ENCODE measurements at regions of chr5 and their contacts with region 1.

Region 1: GRCh38 chr5:135191084-135191826 is 157.2 kb upstream of the PITX1 start:
- DNase-seq: peak; percentile 90
- H3K4me3 Mint-ChIP-seq: peak overlapping the region; percentile 76
- H3K27ac Mint-ChIP-seq: no peak overlapping the region
- H3K4me1 Mint-ChIP-seq: peaks cover 7% of the 10 kb centered on the region
- H3K27me3 Mint-ChIP-seq: no peaks in the 10 kb centered on the region
- CTCF ChIP-seq: peak; percentile 99

Region 2: DNA sequence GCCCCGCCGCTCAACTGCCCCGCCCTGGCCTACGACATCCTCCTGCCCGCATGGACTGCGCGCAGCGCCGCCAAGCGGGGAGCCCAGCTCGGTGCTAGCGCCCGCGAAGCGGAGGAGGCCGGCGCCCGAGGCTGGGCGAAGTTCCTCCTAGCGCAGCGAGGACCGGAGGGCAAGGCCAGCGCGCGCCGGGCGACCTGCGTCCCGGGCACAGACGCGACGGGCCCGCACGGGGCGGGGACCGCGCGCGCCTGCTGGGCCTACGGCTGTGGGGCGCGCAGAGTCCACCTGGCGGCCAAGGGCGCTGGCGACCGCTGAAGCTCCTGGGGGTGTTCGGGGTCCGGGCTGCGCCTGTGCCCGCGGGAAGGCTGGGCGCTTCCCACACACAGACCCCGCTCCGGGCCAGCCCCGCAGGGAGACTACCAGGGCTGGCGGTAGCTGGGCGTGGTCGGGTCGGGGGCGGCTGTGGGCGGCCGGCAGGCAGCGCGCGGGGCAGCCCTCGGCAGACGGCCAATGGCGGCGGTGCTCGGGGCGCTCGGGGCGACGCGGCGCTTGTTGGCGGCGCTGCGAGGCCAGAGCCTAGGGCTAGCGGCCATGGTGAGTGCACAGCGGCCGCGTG is 286.5 kb before region 1 on chr5 and contains the start of gene PCBD2:
- CTCF ChIA-PET with region 1: interaction called, 11 read pairs
- POLR2A ChIA-PET with region 1: interaction called, 5 read pairs
- intact Hi-C with region 1: loop called (anchors 1 kb)
- DNase-seq: peak; percentile 94
- H3K4me3 Mint-ChIP-seq: peak within 1 kb of the TSS; percentile 96
- H3K27ac Mint-ChIP-seq: peak within 1 kb of the TSS; percentile 94
- H3K4me1 Mint-ChIP-seq: no peaks in the 10 kb centered on the region
- H3K27me3 Mint-ChIP-seq: no peaks in the 10 kb centered on the region
- CTCF ChIP-seq: peak; percentile 95
- total RNA-seq, gene PCBD2: 27.3 and 34.5 TPM in 2 replicates

Region 3: GRCh38 chr5:134948911-134949310 is 242.3 kb before region 1 on chr5:
- CTCF ChIA-PET with region 1: interaction called, 12 read pairs
- POLR2A ChIA-PET with region 1: interaction called, 3 read pairs
- intact Hi-C with region 1: no loop called
- DNase-seq: peak; percentile 78
- H3K4me3 Mint-ChIP-seq: no peak overlapping the region
- H3K27ac Mint-ChIP-seq: no peak overlapping the region
- H3K4me1 Mint-ChIP-seq: peaks cover 11% of the 10 kb centered on the region
- H3K27me3 Mint-ChIP-seq: no peaks in the 10 kb centered on the region
- CTCF ChIP-seq: no peak

Region 4: GRCh38 chr5:135034236-135034962 is 156.9 kb before region 1 on chr5:
- CTCF ChIA-PET with region 1: interaction called, 14 read pairs
- POLR2A ChIA-PET with region 1: interaction called, 13 read pairs
- intact Hi-C with region 1: loop called (anchors 1 kb)
- DNase-seq: peak; percentile 78
- H3K4me3 Mint-ChIP-seq: peak overlapping the region; percentile 88
- H3K27ac Mint-ChIP-seq: no peak overlapping the region
- H3K4me1 Mint-ChIP-seq: peaks cover 14% of the 10 kb centered on the region
- H3K27me3 Mint-ChIP-seq: no peaks in the 10 kb centered on the region
- CTCF ChIP-seq: no peak

Region 5: DNA sequence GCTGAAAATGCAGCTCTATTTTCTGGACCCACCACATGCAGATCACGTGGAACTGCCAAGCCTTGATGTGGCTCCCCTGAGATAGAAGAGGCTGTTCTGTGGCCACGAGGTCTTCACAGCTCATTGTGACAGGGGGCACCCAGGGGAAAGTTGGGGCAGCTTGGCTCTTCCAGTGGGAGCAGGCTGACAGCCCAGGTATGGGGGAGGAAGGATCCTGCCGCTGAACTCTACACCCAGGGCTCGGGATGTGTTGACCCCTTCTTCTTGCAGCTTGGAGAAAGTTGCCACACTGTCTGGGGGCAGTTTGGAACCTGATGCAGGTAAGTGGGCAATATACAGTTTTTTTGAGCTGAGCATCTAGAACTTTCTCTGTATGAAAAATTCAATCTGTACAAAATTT is 23.6 kb before region 1 on chr5:
- CTCF ChIA-PET with region 1: interaction called, 10 read pairs
- POLR2A ChIA-PET with region 1: no interaction called
- intact Hi-C with region 1: no loop called
- DNase-seq: no peak
- H3K4me3 Mint-ChIP-seq: no peak overlapping the region
- H3K27ac Mint-ChIP-seq: no peak overlapping the region
- H3K4me1 Mint-ChIP-seq: no peaks in the 10 kb centered on the region
- H3K27me3 Mint-ChIP-seq: peaks cover 21% of the 10 kb centered on the region
- CTCF ChIP-seq: no peak

Region 6: GRCh38 chr5:135208903-135209721 is 17.9 kb after region 1 on chr5:
- CTCF ChIA-PET with region 1: interaction called, 14 read pairs
- POLR2A ChIA-PET with region 1: no interaction called
- intact Hi-C with region 1: no loop called
- DNase-seq: peak; percentile 90
- H3K4me3 Mint-ChIP-seq: no peak overlapping the region
- H3K27ac Mint-ChIP-seq: peak overlapping the region; percentile 8
- H3K4me1 Mint-ChIP-seq: peaks cover 14% of the 10 kb centered on the region
- H3K27me3 Mint-ChIP-seq: no peaks in the 10 kb centered on the region
- CTCF ChIP-seq: no peak

Region 7: DNA sequence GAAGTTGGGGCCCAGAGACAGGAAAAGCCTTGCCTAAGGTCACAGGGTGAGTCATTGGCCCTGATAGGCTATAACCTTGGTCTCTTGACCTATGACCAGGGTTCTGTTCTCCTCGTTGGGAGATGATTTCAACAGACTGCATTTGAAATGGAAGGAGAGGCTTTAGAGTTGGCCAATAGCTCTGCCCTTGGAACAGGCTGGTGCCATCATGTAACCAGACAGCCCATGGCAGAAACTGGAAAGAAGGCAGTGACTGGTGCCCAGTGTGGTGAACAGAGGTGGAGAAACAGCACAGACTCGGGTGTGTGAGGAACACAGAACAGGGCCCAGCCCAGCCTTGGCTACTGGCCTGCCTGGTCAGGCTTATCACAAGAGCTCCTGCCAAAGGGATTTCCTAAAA is 533.4 kb after region 1 on chr5:
- CTCF ChIA-PET with region 1: no interaction called
- POLR2A ChIA-PET with region 1: no interaction called
- intact Hi-C with region 1: no loop called
- DNase-seq: no peak
- H3K4me3 Mint-ChIP-seq: no peak overlapping the region
- H3K27ac Mint-ChIP-seq: no peak overlapping the region
- H3K4me1 Mint-ChIP-seq: no peaks in the 10 kb centered on the region
- H3K27me3 Mint-ChIP-seq: no peaks in the 10 kb centered on the region
- CTCF ChIP-seq: no peak

Measured in MCF 10A (cell line).